GM12878 (cell line): ENCODE measurements at regions of chr3 and their contacts with region 1.

Region 1: DNA sequence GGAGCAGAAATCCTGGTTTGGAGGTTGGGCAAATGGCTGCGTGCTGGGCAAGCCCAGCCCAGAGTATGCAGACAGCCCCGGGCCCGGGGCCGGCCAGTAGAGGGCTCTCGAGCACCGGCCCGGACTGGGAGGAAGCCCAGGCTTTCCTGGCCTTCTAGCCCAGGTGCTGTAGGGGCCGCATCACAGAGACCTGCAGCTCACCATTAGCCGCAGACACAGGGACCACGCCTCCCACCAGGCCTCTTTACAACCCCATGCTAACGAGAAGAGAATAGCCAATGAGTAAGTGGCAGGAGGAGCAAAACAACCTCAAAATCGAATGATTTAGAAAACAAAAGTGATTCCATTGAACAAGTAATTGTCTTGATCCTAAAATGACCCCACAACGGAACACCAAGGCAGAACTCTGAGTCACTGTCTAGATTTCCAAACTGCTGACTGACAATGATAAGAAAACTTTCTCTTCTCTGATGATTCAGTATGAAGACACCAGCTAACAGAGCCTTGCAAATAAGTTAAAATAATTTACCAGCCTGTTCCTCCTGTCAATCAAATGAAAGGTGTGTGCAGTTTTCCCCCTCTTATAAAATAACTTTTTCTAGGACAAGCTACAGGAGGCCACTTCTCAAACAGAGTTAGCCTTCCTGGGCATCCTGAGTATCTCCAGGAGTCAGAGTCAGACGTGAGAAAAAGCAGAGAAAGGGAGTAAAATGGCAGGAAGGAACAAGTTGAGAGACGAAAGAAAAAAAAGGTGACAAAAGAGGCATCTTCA is 102.2 kb downstream of the DGKG start:
- DNase-seq: no peak
- ATAC-seq: peak; percentile 89
- H3K4me3 ChIP-seq: no peak overlapping the region
- H3K27ac ChIP-seq: no peak overlapping the region
- H3K4me1 ChIP-seq: peaks cover 14% of the 10 kb centered on the region
- H3K27me3 ChIP-seq: no peaks in the 10 kb centered on the region
- CTCF ChIP-seq: peak; percentile 96 to 99 (median 97)
- EP300 ChIP-seq: no peak
- POLR2A ChIP-seq: no peak
- RAD21 ChIP-seq: peak; percentile 94

Region 2: DNA sequence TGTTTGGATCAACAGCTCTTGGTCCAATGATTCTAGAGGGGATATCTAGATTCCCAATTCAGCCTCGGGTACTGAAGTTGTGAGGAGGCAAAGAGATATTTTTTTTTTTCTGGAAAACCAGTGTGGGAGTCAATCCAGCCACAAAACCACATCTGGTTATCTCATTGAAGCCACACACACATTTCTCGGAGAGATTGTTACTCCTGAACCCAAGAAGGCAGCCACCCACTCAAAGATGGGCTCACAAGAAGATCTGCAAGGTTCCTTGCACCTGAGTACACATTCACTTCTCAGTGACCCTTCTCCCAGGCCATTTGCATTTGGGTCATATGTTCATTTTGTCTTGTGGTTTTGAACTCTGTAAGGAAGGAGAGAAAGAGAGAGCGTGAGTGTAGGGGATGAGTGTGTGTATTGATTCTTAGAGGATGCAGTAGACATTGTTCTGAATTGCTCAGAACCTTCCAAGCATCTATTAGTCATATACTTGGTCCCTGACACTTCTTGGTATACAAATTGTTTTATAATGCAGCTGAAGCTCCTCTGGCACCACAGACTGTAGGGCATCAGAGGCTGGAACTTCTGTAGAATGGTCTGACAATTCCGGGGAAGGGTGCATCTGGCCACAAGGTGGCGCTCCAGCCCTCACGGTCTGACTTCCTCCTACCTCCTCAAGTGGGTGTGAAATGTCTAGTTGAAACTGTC is 282.7 kb before region 1 on chr3:
- CTCF ChIA-PET with region 1: interaction called, 28 read pairs
- POLR2A ChIA-PET with region 1: interaction called, 4 read pairs
- RAD21 ChIA-PET with region 1: interaction called, 13 read pairs
- SMC1A ChIA-PET with region 1: interaction called, 15 read pairs
- in situ Hi-C with region 1: no loop called
- intact Hi-C with region 1: no loop called
- DNase-seq: peak; percentile 42
- ATAC-seq: peak; percentile 100
- H3K4me3 ChIP-seq: no peak overlapping the region
- H3K27ac ChIP-seq: no peak overlapping the region
- H3K4me1 ChIP-seq: peaks cover 4% of the 10 kb centered on the region; the same call in 1 of the 2 replicates
- H3K27me3 ChIP-seq: no peaks in the 10 kb centered on the region
- CTCF ChIP-seq: peak; percentile 85 to 93 (median 90)
- EP300 ChIP-seq: no peak
- POLR2A ChIP-seq: no peak
- RAD21 ChIP-seq: peak; percentile 76

Region 3: GRCh38 chr3:185983495-185984141 is 276.2 kb before region 1 on chr3:
- CTCF ChIA-PET with region 1: interaction called, 28 read pairs
- POLR2A ChIA-PET with region 1: interaction called, 4 read pairs
- RAD21 ChIA-PET with region 1: interaction called, 13 read pairs
- SMC1A ChIA-PET with region 1: interaction called, 15 read pairs
- in situ Hi-C with region 1: no loop called
- intact Hi-C with region 1: no loop called
- DNase-seq: no peak
- ATAC-seq: peak; percentile 96
- H3K4me3 ChIP-seq: no peak overlapping the region
- H3K27ac ChIP-seq: no peak overlapping the region
- H3K4me1 ChIP-seq: no peaks in the 10 kb centered on the region
- H3K27me3 ChIP-seq: no peaks in the 10 kb centered on the region
- CTCF ChIP-seq: peak; percentile 84 to 87 (median 86)
- EP300 ChIP-seq: no peak
- POLR2A ChIP-seq: no peak
- RAD21 ChIP-seq: peak; percentile 99

Region 4: GRCh38 chr3:186247821-186248814 is 11.7 kb before region 1 on chr3:
- CTCF ChIA-PET with region 1: interaction called, 61 read pairs
- POLR2A ChIA-PET with region 1: no interaction called
- RAD21 ChIA-PET with region 1: interaction called, 3 read pairs
- SMC1A ChIA-PET with region 1: interaction called, 15 read pairs
- in situ Hi-C with region 1: no loop called
- intact Hi-C with region 1: no loop called
- DNase-seq: no peak
- ATAC-seq: peak; percentile 49
- H3K4me3 ChIP-seq: no peak overlapping the region
- H3K27ac ChIP-seq: no peak overlapping the region
- H3K4me1 ChIP-seq: peaks cover 8% of the 10 kb centered on the region
- H3K27me3 ChIP-seq: no peaks in the 10 kb centered on the region
- CTCF ChIP-seq: no peak
- EP300 ChIP-seq: no peak
- POLR2A ChIP-seq: no peak
- RAD21 ChIP-seq: no peak

Region 5: DNA sequence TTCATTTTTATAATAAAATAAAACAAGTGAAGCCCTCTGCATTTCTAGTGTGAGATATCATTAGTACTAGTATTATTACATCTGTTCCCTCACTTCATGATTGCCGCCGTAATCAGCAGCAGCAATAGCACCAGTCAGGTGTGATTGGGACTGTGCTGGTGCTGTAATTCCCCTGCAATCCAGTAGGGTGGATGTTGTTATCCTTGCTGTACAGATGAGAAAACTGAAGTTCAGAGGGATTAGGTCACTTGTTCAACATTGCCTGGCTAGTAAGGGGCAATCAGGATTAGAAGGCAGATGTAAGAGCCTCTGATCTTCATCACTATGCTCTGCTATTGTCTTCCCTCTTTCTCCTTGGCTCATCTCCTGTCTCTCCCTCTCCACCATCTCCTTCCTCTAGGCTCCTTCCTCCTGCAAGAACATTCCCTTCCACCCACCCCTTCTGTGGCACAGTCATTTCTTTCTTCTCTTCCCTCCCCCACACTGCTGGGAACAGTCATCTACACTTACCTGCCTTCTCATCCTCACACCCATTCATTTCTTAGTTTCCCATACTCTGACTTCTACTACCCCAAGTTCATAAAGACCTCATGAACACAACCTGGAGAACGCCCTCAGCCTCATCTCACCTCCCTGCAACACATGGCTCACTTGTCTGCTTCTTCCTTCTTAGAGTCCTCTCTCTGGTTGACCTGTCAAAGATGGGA is 254.7 kb after region 1 on chr3:
- CTCF ChIA-PET with region 1: interaction called, 29 read pairs
- POLR2A ChIA-PET with region 1: no interaction called
- RAD21 ChIA-PET with region 1: interaction called, 7 read pairs
- SMC1A ChIA-PET with region 1: interaction called, 5 read pairs
- in situ Hi-C with region 1: no loop called
- intact Hi-C with region 1: no loop called
- DNase-seq: no peak
- ATAC-seq: no peak
- H3K4me3 ChIP-seq: no peak overlapping the region
- H3K27ac ChIP-seq: no peak overlapping the region
- H3K4me1 ChIP-seq: peaks cover 59% of the 10 kb centered on the region
- H3K27me3 ChIP-seq: no peaks in the 10 kb centered on the region
- CTCF ChIP-seq: peak; percentile 15 to 54 (median 49); a peak in 4 of 6 replicates
- EP300 ChIP-seq: no peak
- POLR2A ChIP-seq: no peak
- RAD21 ChIP-seq: peak; percentile 36; the same call in 1 of the 2 replicates

Region 6: DNA sequence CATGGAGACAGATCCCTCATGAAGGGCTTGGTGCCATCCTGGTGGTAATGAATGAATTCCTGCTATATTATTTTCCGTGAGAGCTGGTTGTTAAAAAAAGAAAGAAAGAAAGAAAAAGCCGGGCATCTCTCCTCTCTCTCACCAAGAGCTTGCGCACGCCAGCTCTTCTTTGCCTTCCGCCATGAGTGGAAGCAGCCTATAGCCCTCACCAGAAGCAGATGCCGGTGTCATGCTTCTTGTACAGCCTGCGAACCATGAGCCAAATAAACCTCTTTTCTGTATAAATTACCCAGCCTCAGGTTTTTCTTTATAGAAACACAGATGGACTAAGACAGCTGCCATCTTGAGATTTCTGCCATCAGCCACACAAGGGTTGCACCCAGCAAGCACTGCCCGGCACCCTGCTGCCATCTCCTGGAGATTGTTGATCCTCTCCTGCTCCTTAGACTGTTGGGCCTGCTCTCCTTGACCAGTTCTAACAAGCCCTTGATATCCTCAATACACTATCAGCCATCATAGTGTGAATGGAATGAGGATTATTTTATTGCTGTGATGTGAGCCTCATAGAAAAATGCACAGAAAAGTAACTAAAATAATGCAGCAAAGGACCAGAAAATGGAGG is 349.6 kb after region 1 on chr3:
- CTCF ChIA-PET with region 1: interaction called, 62 read pairs
- POLR2A ChIA-PET with region 1: no interaction called
- RAD21 ChIA-PET with region 1: interaction called, 3 read pairs
- SMC1A ChIA-PET with region 1: interaction called, 5 read pairs
- in situ Hi-C with region 1: no loop called
- intact Hi-C with region 1: no loop called
- DNase-seq: no peak
- ATAC-seq: peak; percentile 93
- H3K4me3 ChIP-seq: no peak overlapping the region
- H3K27ac ChIP-seq: no peak overlapping the region
- H3K4me1 ChIP-seq: no peaks in the 10 kb centered on the region
- H3K27me3 ChIP-seq: peaks cover 2 to 3% of the 10 kb centered on the region in 2 experiments; a peak in 3 of 4 replicates
- CTCF ChIP-seq: peak; percentile 30 to 50 (median 46); a peak in 5 of 6 replicates
- EP300 ChIP-seq: no peak
- POLR2A ChIP-seq: no peak
- RAD21 ChIP-seq: peak; percentile 38; the same call in 1 of the 2 replicates

Region 7: DNA sequence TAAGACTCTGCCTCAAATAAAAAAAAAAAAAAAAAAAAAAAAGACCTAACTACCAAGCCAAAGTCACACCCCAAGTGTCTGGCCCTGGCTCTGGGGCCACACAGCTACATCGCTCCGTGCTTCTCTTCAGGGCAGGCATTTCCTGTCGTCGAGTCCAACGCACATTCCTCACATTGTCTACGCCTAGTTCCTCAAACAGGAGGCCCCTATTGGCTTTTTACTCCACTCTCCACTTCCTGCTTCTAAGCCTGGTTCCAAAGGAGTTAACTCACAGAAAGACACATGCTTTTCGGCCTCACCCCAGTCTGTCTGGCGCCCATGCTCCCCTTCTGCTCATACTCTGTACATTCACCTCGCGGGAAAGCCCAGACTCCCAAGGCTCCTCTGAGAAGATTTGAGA is 486.2 kb after region 1 on chr3:
- CTCF ChIA-PET with region 1: no interaction called
- POLR2A ChIA-PET with region 1: no interaction called
- RAD21 ChIA-PET with region 1: no interaction called
- SMC1A ChIA-PET with region 1: no interaction called
- in situ Hi-C with region 1: no loop called
- intact Hi-C with region 1: no loop called
- DNase-seq: no peak
- ATAC-seq: peak; percentile 41
- H3K4me3 ChIP-seq: no peak overlapping the region
- H3K27ac ChIP-seq: no peak overlapping the region
- H3K4me1 ChIP-seq: no peaks in the 10 kb centered on the region
- H3K27me3 ChIP-seq: no peaks in the 10 kb centered on the region; a peak in 2 of 4 replicates
- CTCF ChIP-seq: no peak
- EP300 ChIP-seq: no peak
- POLR2A ChIP-seq: no peak
- RAD21 ChIP-seq: no peak